Tibial artery (tissue), 4 donors: ENCODE measurements at regions of chr3 and their contacts with region 1.

Region 1: GRCh38 chr3:149657926-149658733 is at the start of gene WWTR1:
- DNase-seq: peak; percentile 96 to 98
- H3K4me3 ChIP-seq: peak within 1 kb of the TSS; percentile 71 to 76
- H3K27ac ChIP-seq: peak within 1 kb of the TSS; percentile 96 to 98
- H3K4me1 ChIP-seq: peaks cover 0 to 43% (median 29%) of the 10 kb centered on the region in 4 donors
- H3K27me3 ChIP-seq: no peaks in the 10 kb centered on the region
- CTCF ChIP-seq: peak in 1 of 2 experiments; percentile 28

Region 2: DNA sequence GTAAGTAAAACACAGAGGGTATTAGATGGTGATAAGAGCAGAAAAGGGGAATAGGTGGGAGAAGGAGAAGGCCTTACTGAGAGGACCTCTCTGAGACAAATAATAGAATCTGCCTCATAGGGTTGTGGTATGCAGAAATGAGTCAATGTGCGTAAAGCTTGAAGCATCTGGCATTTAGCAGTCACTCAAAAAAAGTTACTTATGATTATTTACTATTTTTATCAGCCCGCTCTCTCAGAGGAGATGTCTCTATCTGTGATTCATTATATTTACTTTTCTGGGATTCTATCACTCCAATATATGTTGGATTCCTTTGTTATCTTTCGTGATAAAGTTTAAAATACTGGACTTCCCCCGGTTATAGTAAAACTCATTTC is 276.1 kb before region 1 on chr3:
- intact Hi-C with region 1: loop called (anchors 10 kb)
- DNase-seq: no peak
- H3K4me3 ChIP-seq: no peak overlapping the region
- H3K27ac ChIP-seq: peak overlapping the region; percentile 55 to 69
- H3K4me1 ChIP-seq: peaks cover 0 to 56% (median 20%) of the 10 kb centered on the region in 4 donors
- H3K27me3 ChIP-seq: no peaks in the 10 kb centered on the region
- CTCF ChIP-seq: no peak

Region 3: DNA sequence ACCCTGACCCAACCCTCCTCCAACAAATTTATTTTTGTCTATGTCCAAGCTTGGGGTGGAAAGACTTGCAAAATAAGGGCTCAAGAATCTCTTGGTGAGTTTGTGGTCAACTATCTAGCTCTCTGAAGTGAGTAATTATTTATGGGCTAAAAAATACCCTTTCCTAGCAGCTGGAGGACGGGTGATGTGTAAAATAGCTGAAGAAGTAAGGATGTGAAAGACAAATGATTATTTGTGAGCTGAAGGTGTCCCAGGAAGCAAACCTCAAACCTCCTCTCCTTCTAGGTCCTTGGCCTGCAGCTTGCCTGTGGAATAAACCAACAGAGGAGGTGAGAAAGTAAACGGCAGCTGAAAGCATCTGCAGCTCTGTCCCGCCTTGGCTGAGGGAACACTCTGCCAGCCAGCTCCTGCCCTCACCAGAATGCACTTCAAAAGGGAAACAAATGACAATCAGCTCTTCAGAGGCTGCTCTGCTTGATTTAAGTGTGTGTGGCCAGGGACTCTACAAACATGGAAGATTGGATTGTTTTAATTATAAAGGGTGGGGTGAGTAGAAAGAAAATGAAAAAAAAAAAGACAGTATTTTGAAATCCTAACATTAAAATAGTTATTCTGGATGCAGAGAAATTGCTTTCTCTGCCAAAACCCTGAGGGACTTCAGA is 123.3 kb before region 1 on chr3:
- intact Hi-C with region 1: loop called (anchors 2 kb)
- DNase-seq: no peak
- H3K4me3 ChIP-seq: no peak overlapping the region
- H3K27ac ChIP-seq: peak overlapping the region; percentile 64 to 66
- H3K4me1 ChIP-seq: peaks cover 0 to 79% (median 63%) of the 10 kb centered on the region in 4 donors
- H3K27me3 ChIP-seq: no peaks in the 10 kb centered on the region
- CTCF ChIP-seq: no peak

Region 4: DNA sequence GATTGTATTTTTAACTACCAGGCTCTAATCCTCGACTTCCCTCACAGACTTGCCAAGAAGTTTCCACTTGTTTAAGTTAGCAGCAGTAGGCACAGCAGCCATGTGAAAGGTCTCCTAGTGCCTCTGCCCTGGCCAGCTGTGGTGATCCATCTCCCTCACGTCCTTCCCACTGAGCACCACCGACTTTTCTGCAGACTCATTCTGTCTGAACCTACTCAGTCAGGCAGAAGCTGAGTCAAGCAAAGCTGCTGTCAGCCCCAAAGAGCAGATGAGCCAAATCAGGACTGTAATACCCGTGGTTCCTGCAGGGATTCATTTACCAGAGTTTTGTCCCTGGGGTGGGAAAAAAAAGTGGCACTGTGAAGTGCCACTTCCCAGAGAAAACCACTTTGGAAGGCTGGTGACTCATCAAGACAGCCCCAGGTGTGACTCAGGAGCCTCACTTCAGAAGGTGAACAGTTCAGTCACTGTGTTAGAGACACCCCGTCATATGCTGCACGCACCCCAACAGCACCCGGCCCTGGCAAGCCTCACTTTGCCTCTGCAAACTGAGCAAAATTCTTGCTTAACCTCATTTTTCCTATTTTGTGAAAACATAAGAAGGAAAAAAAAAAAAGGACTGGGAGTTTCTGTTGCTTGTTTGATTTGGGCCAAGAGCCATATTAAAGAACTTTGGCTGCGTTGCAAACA is 76.3 kb before region 1 on chr3:
- intact Hi-C with region 1: loop called (anchors 5 kb)
- DNase-seq: peak; percentile 51 to 82
- H3K4me3 ChIP-seq: no peak overlapping the region
- H3K27ac ChIP-seq: peak overlapping the region; percentile 20 to 53
- H3K4me1 ChIP-seq: peaks cover 0 to 88% (median 72%) of the 10 kb centered on the region in 4 donors
- H3K27me3 ChIP-seq: no peaks in the 10 kb centered on the region
- CTCF ChIP-seq: no peak